CD8-positive, alpha-beta memory T cell (primary cell): ENCODE measurements at regions of chr2 and their contacts with region 1.

Region 1: DNA sequence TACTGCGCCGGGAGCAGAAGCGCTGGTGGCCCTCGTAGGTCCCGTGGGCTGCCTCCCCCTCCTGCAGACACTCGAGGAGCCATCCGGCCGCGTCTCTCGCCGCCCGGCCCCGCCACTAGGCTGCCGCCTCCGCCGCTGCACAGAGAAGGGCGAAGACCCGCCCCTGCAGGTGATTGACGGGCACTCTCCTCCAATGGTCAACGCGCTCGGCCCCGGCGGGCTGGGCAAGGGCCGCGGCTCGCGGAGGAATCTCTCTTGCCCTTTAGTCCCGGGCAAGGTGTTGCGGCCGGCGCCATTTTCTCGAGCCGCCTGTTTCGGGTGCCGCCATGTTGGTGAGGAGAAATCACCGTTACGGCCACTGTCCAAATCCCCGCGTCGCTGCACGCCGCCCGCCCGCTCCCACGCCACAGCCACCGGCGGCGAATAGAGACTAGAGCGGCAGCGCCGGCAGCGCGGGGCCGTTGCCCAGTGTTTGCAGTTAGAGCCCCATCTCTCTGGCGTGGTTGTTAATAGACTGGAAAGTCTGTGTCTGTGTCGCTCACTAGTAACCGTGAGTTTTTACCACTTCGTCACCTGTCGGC is at the start of gene ZC3H6:
- DNase-seq: peak; percentile 98 to 100 (median 99)
- H3K4me3 ChIP-seq: peak within 1 kb of the TSS; percentile 98
- H3K4me3 Mint-ChIP-seq: peak within 1 kb of the TSS; percentile 92 to 100 (median 95)
- H3K27ac ChIP-seq: peak within 1 kb of the TSS; percentile 100
- H3K27ac Mint-ChIP-seq: peak within 1 kb of the TSS; percentile 98 to 100 (median 99)
- H3K4me1 ChIP-seq: peaks cover 19% of the 10 kb centered on the region
- H3K4me1 Mint-ChIP-seq: peaks cover 20 to 37% (median 27%) of the 10 kb centered on the region in 3 donors
- H3K27me3 ChIP-seq: no peaks in the 10 kb centered on the region
- H3K27me3 Mint-ChIP-seq: peaks cover 0 to 5% of the 10 kb centered on the region in 2 donors
- total RNA-seq, gene ZC3H6: 7.2 to 7.5 TPM

Region 2: DNA sequence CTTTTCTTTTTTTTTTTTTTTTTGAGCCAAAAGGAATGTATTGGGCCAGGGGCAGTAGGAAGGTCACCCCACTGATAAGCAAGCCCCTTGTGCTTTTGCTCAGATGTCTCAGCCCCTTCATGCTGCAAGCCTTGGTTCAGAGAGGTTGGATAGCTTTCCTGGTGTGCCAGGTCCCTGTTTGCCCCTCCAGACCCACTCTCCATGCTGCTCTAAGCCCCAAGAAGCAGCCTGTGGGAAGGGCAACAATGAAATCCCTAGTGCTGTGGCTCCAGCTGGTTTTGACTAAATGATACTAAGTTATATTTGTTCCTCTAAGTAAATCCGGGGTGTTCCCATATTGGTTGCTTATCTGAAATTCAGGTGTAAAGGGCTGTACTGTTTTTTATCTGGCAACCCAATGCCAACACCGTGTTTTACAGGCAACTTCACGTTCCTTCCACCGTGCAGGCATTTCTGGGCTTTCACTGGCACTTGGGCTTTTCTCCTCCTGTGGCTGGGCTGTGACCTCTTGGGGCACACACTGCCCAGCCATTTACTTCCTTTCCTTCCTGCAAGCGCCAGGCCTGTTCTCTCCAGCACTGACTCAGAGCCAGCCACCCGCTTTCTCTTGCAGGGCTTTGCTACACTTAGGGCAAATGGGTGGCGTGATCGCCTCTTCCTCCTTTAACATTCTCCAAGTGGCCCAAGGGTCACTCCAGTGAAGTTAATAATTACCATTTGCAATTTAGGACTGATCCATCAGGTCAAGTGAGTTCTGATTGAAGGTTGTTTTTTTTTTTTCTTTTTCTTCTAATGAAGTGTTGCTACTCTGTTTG is 355.4 kb before region 1 on chr2:
- CTCF ChIA-PET with region 1: no interaction called
- POLR2A ChIA-PET with region 1: no interaction called
- DNase-seq: no peak
- H3K4me3 ChIP-seq: no peak overlapping the region
- H3K4me3 Mint-ChIP-seq: no peak overlapping the region
- H3K27ac ChIP-seq: no peak overlapping the region
- H3K27ac Mint-ChIP-seq: peak overlapping the region in 2 of 8 donors; percentile 41 to 61
- H3K4me1 ChIP-seq: no peaks in the 10 kb centered on the region
- H3K4me1 Mint-ChIP-seq: no peaks in the 10 kb centered on the region
- H3K27me3 ChIP-seq: no peaks in the 10 kb centered on the region
- H3K27me3 Mint-ChIP-seq: peaks cover 0 to 19% of the 10 kb centered on the region in 2 donors

Region 3: GRCh38 chr2:112204411-112204810 is 71.0 kb before region 1 on chr2:
- CTCF ChIA-PET with region 1: no interaction called
- POLR2A ChIA-PET with region 1: no interaction called
- DNase-seq: no peak
- H3K4me3 ChIP-seq: no peak overlapping the region
- H3K4me3 Mint-ChIP-seq: no peak overlapping the region
- H3K27ac ChIP-seq: no peak overlapping the region
- H3K27ac Mint-ChIP-seq: no peak overlapping the region
- H3K4me1 ChIP-seq: no peaks in the 10 kb centered on the region
- H3K4me1 Mint-ChIP-seq: no peaks in the 10 kb centered on the region
- H3K27me3 ChIP-seq: no peaks in the 10 kb centered on the region
- H3K27me3 Mint-ChIP-seq: peaks cover 3 to 4% of the 10 kb centered on the region in 2 donors

Region 4: DNA sequence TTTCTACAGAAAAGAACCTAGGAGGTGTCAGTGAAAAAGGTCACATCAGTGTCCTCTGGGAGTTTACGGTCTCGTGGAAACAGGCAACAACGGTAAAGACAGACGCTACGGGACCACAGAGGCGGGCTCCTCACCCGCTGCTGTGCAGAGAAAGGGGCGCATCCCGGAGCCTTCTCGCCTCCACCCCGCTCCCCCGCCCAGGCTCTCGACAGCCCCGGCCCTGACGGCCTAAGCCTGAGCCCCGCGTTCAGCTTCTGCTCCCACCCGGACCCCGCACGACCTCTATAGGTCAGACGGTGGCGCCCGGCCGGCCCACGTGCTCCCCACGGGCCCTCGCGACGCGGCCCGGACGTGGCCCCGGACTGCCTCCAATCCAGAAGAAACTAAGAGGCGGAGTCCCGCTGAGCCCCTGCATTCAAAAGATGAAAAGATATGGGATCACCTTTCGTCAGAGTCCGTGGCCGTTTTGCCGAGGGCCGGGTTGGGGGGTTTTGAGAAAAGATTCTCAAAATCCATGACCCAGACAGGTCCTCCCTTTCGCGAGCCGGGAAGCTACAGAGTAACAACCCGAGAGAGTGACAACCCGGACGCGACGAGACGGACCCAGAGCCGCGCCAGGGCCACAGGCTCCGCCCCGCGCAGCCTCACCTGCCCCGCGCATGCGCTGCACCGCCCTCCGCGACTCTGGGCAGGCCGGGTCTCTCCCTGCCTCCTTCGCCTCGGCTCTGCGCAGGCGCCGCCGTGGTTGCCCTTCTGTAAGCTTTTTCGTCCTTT is 20.7 kb before region 1 on chr2 and contains the start of gene ZC3H8:
- CTCF ChIA-PET with region 1: interaction called, 21 read pairs
- POLR2A ChIA-PET with region 1: interaction called, 15 read pairs
- DNase-seq: peak; percentile 95 to 96 (median 96)
- H3K4me3 ChIP-seq: peak within 1 kb of the TSS; percentile 71
- H3K4me3 Mint-ChIP-seq: peak within 1 kb of the TSS; percentile 87 to 95 (median 89)
- H3K27ac ChIP-seq: peak within 1 kb of the TSS; percentile 93
- H3K27ac Mint-ChIP-seq: peak within 1 kb of the TSS; percentile 88 to 98 (median 96)
- H3K4me1 ChIP-seq: peaks cover 29% of the 10 kb centered on the region
- H3K4me1 Mint-ChIP-seq: peaks cover 19 to 21% (median 20%) of the 10 kb centered on the region in 3 donors
- H3K27me3 ChIP-seq: no peaks in the 10 kb centered on the region
- H3K27me3 Mint-ChIP-seq: no peaks in the 10 kb centered on the region
- total RNA-seq, gene ZC3H8: 29.7 to 32.0 TPM

Region 5: GRCh38 chr2:112259509-112260294 is 15.7 kb before region 1 on chr2:
- CTCF ChIA-PET with region 1: interaction called, 21 read pairs
- POLR2A ChIA-PET with region 1: interaction called, 15 read pairs
- DNase-seq: peak; percentile 71 to 87 (median 75)
- H3K4me3 ChIP-seq: peak overlapping the region; percentile 28
- H3K4me3 Mint-ChIP-seq: peak overlapping the region; percentile 11 to 81 (median 70)
- H3K27ac ChIP-seq: no peak overlapping the region
- H3K27ac Mint-ChIP-seq: peak overlapping the region in 6 of 8 donors; percentile 9 to 93 (median 78)
- H3K4me1 ChIP-seq: peaks cover 13% of the 10 kb centered on the region
- H3K4me1 Mint-ChIP-seq: peaks cover 6 to 9% (median 7%) of the 10 kb centered on the region in 3 donors
- H3K27me3 ChIP-seq: no peaks in the 10 kb centered on the region
- H3K27me3 Mint-ChIP-seq: peaks cover 0 to 9% of the 10 kb centered on the region in 2 donors